Activated CD8-positive, alpha-beta T cell treated with anti-CD3 and anti-CD28 coated beads, Interleukin-2, amount 10 ng/mL, durations not matched to agents 7 days and 5 days (primary cell): ENCODE measurements at regions of chr10 and their contacts with region 1.

Region 1: GRCh38 chr10:68318331-68319059 is 13.4 kb upstream of the HNRNPH3 start:
- DNase-seq: no peak
- ATAC-seq: no peak
- H3K4me3 Mint-ChIP-seq: no peak overlapping the region
- H3K27ac Mint-ChIP-seq: no peak overlapping the region
- H3K4me1 Mint-ChIP-seq: peaks cover 8% of the 10 kb centered on the region
- H3K27me3 Mint-ChIP-seq: no peaks in the 10 kb centered on the region

Region 2: GRCh38 chr10:68301790-68302502 is 16.5 kb before region 1 on chr10:
- CTCF ChIA-PET with region 1: interaction called, 19 read pairs
- POLR2A ChIA-PET with region 1: no interaction called
- DNase-seq: no peak
- ATAC-seq: peak; percentile 49
- H3K4me3 Mint-ChIP-seq: no peak overlapping the region
- H3K27ac Mint-ChIP-seq: no peak overlapping the region
- H3K4me1 Mint-ChIP-seq: no peaks in the 10 kb centered on the region
- H3K27me3 Mint-ChIP-seq: no peaks in the 10 kb centered on the region

Region 3: DNA sequence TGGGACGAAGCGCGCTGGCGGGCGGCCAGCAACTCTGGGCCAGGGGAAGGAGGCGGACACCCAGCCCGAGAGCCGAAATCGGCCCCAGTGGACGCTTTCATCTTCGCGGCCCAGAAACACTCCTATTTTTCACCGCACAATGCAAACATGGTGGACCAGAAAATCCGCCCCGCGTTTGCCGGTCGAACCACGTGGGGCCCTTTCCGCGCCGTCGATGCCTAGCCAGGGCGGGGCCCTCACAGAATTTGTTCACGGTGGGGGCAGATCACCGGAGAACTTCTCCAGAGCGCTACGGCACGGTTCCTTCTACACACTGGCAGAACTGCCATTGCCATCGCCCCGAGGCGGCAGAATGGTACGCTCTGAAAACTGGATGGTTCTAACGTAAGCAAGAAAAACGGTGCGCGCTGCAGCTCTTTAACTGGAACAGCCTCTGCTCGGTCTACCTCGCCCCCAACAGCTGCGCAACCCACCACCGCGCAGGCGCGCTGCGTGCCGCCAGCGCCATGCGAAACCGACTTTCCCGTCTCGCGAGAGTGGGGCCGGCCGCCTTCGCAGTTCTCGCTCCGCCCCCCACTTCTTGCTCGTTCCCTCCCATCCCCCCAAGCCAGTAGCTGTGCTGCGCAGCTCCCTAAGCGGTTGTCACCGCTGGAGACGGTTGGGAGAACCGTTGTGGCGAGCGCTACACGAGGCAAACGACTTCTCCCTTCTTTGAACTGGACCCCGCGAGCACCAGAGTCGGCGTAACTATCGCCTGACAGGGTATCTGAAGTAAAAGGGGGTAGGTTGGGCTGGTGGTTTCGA is 13.2 kb after region 1 on chr10 and contains the start of gene HNRNPH3:
- CTCF ChIA-PET with region 1: interaction called, 3 read pairs
- POLR2A ChIA-PET with region 1: interaction called, 38 read pairs
- DNase-seq: peak; percentile 99
- ATAC-seq: peak; percentile 88
- H3K4me3 Mint-ChIP-seq: peak within 1 kb of the TSS; percentile 98
- H3K27ac Mint-ChIP-seq: peak within 1 kb of the TSS; percentile 100
- H3K4me1 Mint-ChIP-seq: peaks cover 44% of the 10 kb centered on the region
- H3K27me3 Mint-ChIP-seq: no peaks in the 10 kb centered on the region
- total RNA-seq, gene HNRNPH3: 114 to 122 TPM